ENCODE measurements at regions of chr4 and their contacts with region 1.

Region 1: GRCh38 chr4:102620697-102621497 is 119.7 kb downstream of the NFKB1 start:
- DNase-seq: peak; percentile 41
- CTCF ChIP-seq: no peak

Region 2: DNA sequence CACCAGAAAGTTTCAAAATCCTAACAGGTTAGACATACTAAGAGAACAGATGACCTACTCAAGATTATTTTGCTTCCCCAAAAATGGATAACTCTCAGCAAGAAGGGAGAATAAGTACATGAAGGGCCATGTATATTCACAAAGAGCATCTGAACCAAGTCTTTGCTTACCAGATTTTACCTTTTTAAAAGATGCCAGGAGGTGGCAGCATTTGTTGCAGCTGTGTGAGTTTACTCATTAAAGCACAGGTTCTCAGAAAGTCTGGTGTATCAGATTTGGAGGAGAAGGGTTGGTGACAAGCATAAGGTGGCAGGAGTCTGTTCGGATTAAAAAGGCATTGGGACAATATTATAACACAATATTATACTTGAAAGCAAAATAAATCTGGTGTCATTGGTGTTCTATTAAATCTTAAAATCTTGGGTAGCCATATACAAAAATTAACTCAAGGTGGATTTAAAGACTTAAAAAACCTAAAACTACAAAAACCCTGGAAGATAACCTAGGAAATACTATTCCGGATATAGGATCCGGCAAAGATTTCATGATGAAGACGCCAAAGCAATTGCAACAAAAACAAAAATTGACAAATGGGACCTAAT is 171.0 kb before region 1 on chr4:
- in situ Hi-C with region 1: loop called (anchors 5 kb)
- DNase-seq: peak; percentile 67
- CTCF ChIP-seq: peak; percentile 57

Region 3: DNA sequence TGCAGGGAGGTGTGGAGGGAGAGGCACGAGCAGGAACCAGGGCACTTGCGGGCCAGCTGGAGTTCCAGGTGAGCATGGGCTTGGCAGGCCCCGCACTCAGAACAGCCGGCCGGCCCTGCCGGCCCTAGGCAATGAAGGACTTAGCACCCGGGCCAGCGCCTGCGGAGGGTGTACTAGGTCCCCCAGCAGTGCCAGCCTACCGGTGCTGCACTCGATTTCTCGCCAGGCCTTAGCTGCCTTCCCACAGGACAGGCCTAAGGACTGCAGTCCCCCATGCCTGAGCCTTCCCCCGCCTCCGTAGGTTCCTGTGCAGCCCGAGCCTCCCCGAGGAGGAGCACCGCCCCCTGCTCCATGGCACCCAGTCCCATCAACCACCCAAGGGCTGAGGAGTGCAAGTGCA is 137.8 kb before region 1 on chr4:
- in situ Hi-C with region 1: no loop called
- DNase-seq: no peak
- CTCF ChIP-seq: no peak

Region 4: DNA sequence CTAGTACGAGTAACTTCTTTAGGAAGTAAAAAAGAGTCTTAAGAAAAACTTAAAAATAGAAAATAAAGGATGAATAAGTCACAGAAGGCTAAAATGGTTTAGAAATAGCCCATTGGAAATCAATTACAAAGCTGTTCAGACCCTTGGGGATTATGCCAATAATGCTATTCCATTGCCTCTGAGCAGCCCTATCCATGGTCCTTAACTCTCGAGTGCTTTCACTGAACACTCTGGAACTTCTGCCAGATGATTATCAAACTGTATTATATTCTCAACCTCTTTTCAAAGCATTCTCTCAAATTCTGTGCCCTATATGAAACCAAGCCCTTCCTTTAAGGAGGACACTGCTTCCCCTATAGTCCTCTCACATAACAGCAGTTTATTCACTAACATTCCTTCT is 381.7 kb after region 1 on chr4:
- in situ Hi-C with region 1: loop called (anchors 5 kb)
- DNase-seq: no peak
- CTCF ChIP-seq: no peak

Region 5: GRCh38 chr4:103099691-103100392 is 478.9 kb after region 1 on chr4 and contains the start of gene BDH2:
- in situ Hi-C with region 1: loop called (anchors 5 kb)
- DNase-seq: peak; percentile 78
- CTCF ChIP-seq: peak; percentile 66

Measured in GM13976 (cell line).